AG04449 (cell line): ENCODE measurements at regions of chr18 and their contacts with region 1.

Region 1: GRCh38 chr18:21489119-21489750 is 111.3 kb downstream of the ESCO1 start:
- DNase-seq: peak; percentile 9
- H3K4me3 ChIP-seq: no peak overlapping the region
- CTCF ChIP-seq: peak; percentile 68

Region 2: GRCh38 chr18:21468514-21469164 is 20.6 kb before region 1 on chr18:
- CTCF ChIA-PET with region 1: interaction called, 11 read pairs
- POLR2A ChIA-PET with region 1: no interaction called
- DNase-seq: no peak
- H3K4me3 ChIP-seq: no peak overlapping the region
- CTCF ChIP-seq: no peak

Region 3: GRCh38 chr18:21522530-21522929 is 33.3 kb after region 1 on chr18:
- CTCF ChIA-PET with region 1: no interaction called
- POLR2A ChIA-PET with region 1: no interaction called
- DNase-seq: no peak
- H3K4me3 ChIP-seq: no peak overlapping the region
- CTCF ChIP-seq: no peak

Region 4: DNA sequence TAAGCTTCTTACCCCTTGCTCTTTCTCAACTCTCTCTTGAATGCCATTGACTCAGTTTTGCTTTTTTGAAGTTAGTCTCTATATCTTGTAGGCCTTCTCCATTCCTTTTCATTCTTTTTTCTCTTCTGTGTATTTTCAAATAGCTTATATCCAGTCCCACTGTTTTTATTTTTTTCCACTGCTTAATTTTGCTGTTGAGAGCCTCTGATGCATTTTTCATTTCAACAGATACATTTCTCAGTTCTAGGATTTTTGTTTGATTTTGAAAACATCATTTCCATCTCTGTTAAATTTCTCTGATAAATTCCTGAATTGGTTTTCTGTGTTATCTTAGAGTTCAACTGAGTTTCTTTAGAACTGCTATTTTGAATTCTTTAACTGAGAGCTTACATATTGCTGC is 297.3 kb after region 1 on chr18:
- CTCF ChIA-PET with region 1: no interaction called
- POLR2A ChIA-PET with region 1: no interaction called
- DNase-seq: no peak
- H3K4me3 ChIP-seq: no peak overlapping the region
- CTCF ChIP-seq: no peak